MCF 10A (cell line): ENCODE measurements at regions of chr1 and their contacts with region 1.

Region 1: DNA sequence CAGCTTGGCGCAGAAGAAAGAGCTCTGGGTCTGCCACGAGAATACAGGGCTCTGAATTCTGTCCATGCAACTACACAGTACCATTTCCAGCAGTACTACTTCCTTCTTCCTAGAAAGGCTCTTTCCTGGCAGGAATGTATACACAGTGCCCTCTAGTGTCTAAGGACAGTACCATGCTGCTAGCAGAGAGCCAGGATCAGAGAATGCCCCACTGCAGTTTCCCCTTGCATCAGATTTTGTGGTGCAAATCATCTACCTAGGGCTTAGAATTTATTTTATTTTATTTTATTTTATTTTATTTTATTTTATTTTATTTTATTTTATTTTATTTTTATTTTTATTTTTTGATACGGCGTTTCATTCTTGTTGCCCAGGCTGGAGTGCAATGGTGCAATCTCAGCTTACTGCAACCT is 50.8 kb downstream of the PAX7 start:
- DNase-seq: peak; percentile 83
- H3K4me3 Mint-ChIP-seq: no peak overlapping the region
- H3K27ac Mint-ChIP-seq: peak overlapping the region; percentile 7
- H3K4me1 Mint-ChIP-seq: peaks cover 6% of the 10 kb centered on the region
- H3K27me3 Mint-ChIP-seq: no peaks in the 10 kb centered on the region
- CTCF ChIP-seq: peak; percentile 79

Region 2: DNA sequence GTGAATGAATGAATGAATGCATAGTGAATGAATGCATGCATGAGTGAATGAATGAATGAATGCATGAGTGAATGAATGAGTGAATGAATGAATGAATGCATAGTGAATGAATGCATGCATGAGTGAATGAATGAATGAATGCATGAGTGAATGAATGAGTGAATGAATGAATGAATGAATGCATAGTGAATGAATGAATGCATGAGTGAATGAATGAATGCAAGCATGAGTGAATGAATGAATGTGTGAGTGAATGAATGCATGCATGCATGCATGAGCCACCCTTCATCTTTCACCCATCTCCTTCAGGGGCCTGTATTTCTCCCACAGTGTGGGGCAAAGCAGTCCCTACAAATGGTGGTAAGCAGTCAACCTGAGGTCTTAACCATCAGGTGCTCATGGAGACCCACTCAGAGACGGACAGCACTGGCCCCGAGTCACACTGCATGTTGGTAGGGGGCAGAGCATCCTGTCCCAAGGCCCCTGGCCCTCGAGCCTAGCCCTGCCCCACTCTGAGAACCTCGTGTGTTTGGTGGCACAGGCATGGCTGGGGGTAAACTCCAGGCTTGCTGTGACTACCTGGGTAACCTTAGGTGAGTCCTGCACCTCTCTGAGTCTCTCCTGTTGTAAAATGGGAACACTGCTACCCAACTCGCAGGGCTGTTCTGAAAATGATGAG is 78.8 kb before region 1 on chr1:
- CTCF ChIA-PET with region 1: interaction called, 122 read pairs
- POLR2A ChIA-PET with region 1: no interaction called
- intact Hi-C with region 1: loop called (anchors 1 kb)
- DNase-seq: no peak
- H3K4me3 Mint-ChIP-seq: no peak overlapping the region
- H3K27ac Mint-ChIP-seq: no peak overlapping the region
- H3K4me1 Mint-ChIP-seq: no peaks in the 10 kb centered on the region
- H3K27me3 Mint-ChIP-seq: no peaks in the 10 kb centered on the region
- CTCF ChIP-seq: no peak

Region 3: GRCh38 chr1:18634276-18634675 is 47.2 kb before region 1 on chr1:
- CTCF ChIA-PET with region 1: no interaction called
- POLR2A ChIA-PET with region 1: no interaction called
- intact Hi-C with region 1: no loop called
- DNase-seq: no peak
- H3K4me3 Mint-ChIP-seq: no peak overlapping the region
- H3K27ac Mint-ChIP-seq: no peak overlapping the region
- H3K4me1 Mint-ChIP-seq: no peaks in the 10 kb centered on the region
- H3K27me3 Mint-ChIP-seq: peaks cover 100% of the 10 kb centered on the region
- CTCF ChIP-seq: no peak

Region 4: DNA sequence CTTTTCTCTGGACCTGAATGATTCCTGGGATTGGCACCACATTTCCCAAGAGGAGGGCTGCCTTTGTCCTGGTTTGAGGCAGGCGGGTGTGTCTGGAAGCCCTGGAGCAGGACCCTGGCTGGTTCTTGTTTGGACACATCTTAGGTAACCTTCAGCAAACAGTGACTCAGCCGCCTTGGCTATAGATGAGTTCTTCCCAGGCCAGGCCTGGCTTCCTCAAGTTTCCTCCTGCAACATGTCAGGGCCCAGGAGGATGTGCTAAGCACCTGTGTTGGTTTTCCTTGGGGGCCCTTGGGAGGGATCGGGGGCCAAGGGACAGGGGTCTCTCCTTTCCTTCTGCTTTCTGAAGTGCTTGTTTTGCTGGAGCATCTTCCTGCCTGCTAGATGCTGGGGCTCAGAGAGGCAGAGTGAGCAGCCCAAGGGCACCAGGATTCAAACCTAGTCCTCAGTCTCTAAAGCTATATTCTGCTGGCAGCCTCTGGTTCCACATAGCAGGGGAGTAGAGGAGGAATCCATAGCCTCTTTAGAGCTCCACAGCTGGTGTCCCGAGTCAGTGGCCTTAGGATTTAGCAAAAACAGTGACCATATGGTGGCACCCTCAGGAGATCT is 12.5 kb before region 1 on chr1:
- CTCF ChIA-PET with region 1: interaction called, 23 read pairs
- POLR2A ChIA-PET with region 1: interaction called, 3 read pairs
- intact Hi-C with region 1: no loop called
- DNase-seq: peak; percentile 96
- H3K4me3 Mint-ChIP-seq: no peak overlapping the region
- H3K27ac Mint-ChIP-seq: peak overlapping the region; percentile 27
- H3K4me1 Mint-ChIP-seq: peaks cover 37% of the 10 kb centered on the region
- H3K27me3 Mint-ChIP-seq: no peaks in the 10 kb centered on the region
- CTCF ChIP-seq: no peak

Region 5: GRCh38 chr1:18820791-18821641 is 139.6 kb after region 1 on chr1:
- CTCF ChIA-PET with region 1: interaction called, 5 read pairs
- POLR2A ChIA-PET with region 1: no interaction called
- intact Hi-C with region 1: loop called (anchors 1 kb)
- DNase-seq: peak; percentile 70
- H3K4me3 Mint-ChIP-seq: no peak overlapping the region
- H3K27ac Mint-ChIP-seq: no peak overlapping the region
- H3K4me1 Mint-ChIP-seq: peaks cover 7% of the 10 kb centered on the region
- H3K27me3 Mint-ChIP-seq: peaks cover 39% of the 10 kb centered on the region
- CTCF ChIP-seq: peak; percentile 91